ENCODE measurements at regions of chr1 and their contacts with region 1.

Region 1: GRCh38 chr1:54276617-54277450 is 76.9 kb downstream of the MRPL37 start:
- DNase-seq: no peak
- ATAC-seq: no peak
- H3K4me3 ChIP-seq: no peak overlapping the region
- H3K27ac ChIP-seq: no peak overlapping the region
- H3K4me1 ChIP-seq: peaks cover 3% of the 10 kb centered on the region; the same call in 1 of the 2 replicates
- H3K27me3 ChIP-seq: no peaks in the 10 kb centered on the region
- CTCF ChIP-seq: no peak

Region 2: GRCh38 chr1:54263601-54264226 is 13.1 kb before region 1 on chr1:
- CTCF ChIA-PET with region 1: no interaction called
- POLR2A ChIA-PET with region 1: interaction called, 17 read pairs
- in situ Hi-C with region 1: no loop called
- intact Hi-C with region 1: no loop called
- DNase-seq: no peak
- ATAC-seq: no peak
- H3K4me3 ChIP-seq: no peak overlapping the region
- H3K27ac ChIP-seq: no peak overlapping the region
- H3K4me1 ChIP-seq: no peaks in the 10 kb centered on the region
- H3K27me3 ChIP-seq: no peaks in the 10 kb centered on the region
- CTCF ChIP-seq: no peak

Region 3: DNA sequence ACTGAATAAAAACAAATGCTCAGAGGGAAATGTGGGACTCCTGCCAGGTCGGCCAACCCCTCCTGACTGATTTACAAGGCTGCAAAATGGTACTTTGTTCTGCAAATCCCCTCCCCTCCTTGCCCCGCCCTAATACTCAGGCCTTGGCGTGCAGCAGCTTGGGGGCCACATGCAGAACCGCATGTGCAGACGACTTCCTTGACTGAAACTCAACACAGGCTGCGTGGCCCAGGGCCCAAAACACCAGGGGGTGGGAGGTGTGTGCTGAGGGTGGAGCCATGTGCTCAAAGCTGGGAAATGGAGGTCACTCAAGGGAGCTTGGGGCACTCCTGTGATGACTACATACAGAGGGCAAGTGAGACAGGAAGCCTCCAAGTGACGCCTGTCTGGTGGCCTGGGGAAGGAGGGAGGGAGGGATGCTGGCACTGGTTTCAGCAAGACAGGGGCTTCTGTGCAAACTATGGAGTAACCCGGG is 10.4 kb after region 1 on chr1:
- CTCF ChIA-PET with region 1: no interaction called
- POLR2A ChIA-PET with region 1: no interaction called
- in situ Hi-C with region 1: no loop called
- intact Hi-C with region 1: no loop called
- DNase-seq: no peak
- ATAC-seq: no peak
- H3K4me3 ChIP-seq: no peak overlapping the region
- H3K27ac ChIP-seq: no peak overlapping the region
- H3K4me1 ChIP-seq: peaks cover 3% of the 10 kb centered on the region; the same call in 1 of the 2 replicates
- H3K27me3 ChIP-seq: no peaks in the 10 kb centered on the region
- CTCF ChIP-seq: no peak

Measured in Panc1 (cell line).